ENCODE measurements at regions of chr12 and their contacts with region 1.

Region 1: DNA sequence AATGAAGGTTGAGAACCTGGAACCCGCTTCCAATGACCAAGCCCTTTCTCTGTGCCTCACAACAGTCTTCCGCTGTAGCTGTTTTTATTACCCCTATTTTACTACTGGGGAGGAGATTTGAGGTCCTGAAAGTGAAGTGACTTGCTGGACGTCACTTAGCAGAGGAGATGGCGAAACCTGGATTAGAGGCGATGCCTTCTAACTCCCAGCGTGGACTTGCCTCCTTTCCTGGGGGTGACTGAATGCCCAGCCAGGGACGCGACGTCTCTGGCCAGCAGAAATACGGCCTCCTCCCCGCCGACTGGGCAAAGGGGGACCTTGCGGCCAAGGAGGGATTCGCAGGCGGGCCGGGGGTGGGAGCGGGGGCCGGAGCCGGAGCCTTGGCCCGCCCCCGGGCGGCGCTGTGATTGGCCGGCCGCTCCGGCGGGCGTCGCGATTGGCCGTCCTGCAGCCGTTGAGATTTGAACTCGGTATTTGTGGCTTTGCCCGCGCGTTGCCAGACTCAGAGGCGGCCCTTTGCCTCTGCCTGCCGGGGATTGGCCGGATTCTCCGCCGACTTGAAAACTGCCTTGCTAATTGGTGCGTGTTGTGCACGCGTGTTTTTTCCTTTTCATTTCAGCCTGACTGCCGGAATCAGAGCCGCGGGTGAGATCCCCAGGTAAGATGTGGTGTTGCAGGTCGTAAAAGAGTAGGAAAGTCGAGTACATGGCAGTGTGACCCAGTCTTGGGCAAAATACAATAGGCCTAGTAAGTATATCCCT is at the start of gene NCAPD2:
- DNase-seq: peak; percentile 98 to 99
- H3K4me3 ChIP-seq: peak within 1 kb of the TSS; percentile 81
- H3K4me3 Mint-ChIP-seq: peak within 1 kb of the TSS; percentile 92
- H3K27ac Mint-ChIP-seq: peak within 1 kb of the TSS; percentile 96
- H3K4me1 ChIP-seq: peaks cover 12% of the 10 kb centered on the region
- H3K4me1 Mint-ChIP-seq: peaks cover 10% of the 10 kb centered on the region
- H3K27me3 ChIP-seq: no peaks in the 10 kb centered on the region
- H3K27me3 Mint-ChIP-seq: no peaks in the 10 kb centered on the region
- CTCF ChIP-seq: peak in 1 of 2 experiments; percentile 17
- total RNA-seq, gene NCAPD2: 204 and 218 TPM in 2 replicates

Region 2: GRCh38 chr12:6399884-6400644 is 93.6 kb before region 1 on chr12:
- CTCF ChIA-PET with region 1: no interaction called
- POLR2A ChIA-PET with region 1: interaction called, 14 read pairs
- intact Hi-C with region 1: no loop called
- DNase-seq: no peak
- H3K4me3 ChIP-seq: no peak overlapping the region
- H3K4me3 Mint-ChIP-seq: no peak overlapping the region
- H3K27ac Mint-ChIP-seq: no peak overlapping the region
- H3K4me1 ChIP-seq: no peaks in the 10 kb centered on the region
- H3K4me1 Mint-ChIP-seq: peaks cover 7% of the 10 kb centered on the region
- H3K27me3 ChIP-seq: no peaks in the 10 kb centered on the region
- H3K27me3 Mint-ChIP-seq: no peaks in the 10 kb centered on the region
- CTCF ChIP-seq: no peak

Region 3: DNA sequence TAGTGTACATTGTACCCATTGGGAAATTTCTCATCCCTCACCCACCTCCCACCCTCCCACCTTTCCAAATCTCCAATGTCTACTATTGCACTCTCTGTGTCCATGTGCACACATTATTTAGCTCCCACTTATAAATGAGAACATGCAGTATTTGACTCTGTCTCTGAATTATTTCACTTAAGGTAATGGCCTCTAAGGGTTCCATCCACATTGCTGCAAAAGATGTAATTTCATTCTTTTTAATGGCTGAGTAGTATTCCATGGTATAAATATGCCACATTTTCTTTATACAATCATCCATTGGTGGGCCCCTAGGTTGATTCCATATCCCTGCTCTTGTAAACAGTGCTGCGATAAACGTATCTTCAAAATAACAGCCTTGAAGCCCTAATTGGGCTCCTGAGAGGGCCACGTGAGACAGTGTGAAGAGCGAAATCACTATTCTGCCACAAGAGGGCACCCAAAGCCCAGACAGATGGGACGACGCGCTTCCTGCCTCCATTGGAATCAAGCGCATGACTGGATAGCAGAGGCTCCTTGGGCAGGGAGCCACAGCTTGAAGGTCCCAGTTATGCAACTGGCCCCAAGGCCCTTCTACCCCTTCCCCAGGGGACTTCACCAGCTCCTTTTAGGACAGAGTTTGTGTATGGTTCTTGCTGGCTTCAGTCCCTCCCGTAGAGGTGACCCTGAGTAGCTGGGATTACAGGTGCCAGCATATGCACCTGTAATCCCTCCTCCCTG is 70.2 kb before region 1 on chr12:
- CTCF ChIA-PET with region 1: no interaction called
- POLR2A ChIA-PET with region 1: no interaction called
- intact Hi-C with region 1: loop called (anchors 1 kb)
- DNase-seq: peak; percentile 87
- H3K4me3 ChIP-seq: no peak overlapping the region
- H3K4me3 Mint-ChIP-seq: no peak overlapping the region
- H3K27ac Mint-ChIP-seq: no peak overlapping the region
- H3K4me1 ChIP-seq: peaks cover 8% of the 10 kb centered on the region
- H3K4me1 Mint-ChIP-seq: peaks cover 8% of the 10 kb centered on the region
- H3K27me3 ChIP-seq: no peaks in the 10 kb centered on the region
- H3K27me3 Mint-ChIP-seq: no peaks in the 10 kb centered on the region
- CTCF ChIP-seq: peak; percentile 88 to 97

Region 4: DNA sequence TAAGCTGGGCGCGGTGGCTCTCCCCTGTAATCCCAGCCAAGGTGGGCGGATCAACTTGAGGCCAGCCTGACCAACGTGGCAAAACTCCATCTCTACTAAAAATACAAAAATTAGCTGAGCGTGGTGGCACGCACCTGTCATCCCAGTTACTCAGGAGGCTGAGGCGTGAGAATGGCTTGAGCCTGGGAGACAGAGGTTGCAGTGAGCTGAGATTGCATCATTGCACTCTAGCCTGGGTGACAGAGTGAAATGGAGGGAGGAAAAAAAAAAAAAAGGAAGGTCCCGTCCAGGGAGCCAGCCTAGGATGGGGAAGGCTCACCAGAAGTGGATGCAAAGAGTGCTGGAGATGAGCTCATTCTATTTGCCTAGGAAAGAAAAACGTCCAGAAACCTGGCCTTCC is 50.8 kb before region 1 on chr12:
- CTCF ChIA-PET with region 1: no interaction called
- POLR2A ChIA-PET with region 1: interaction called, 14 read pairs
- intact Hi-C with region 1: no loop called
- DNase-seq: no peak
- H3K4me3 ChIP-seq: no peak overlapping the region
- H3K4me3 Mint-ChIP-seq: no peak overlapping the region
- H3K27ac Mint-ChIP-seq: no peak overlapping the region
- H3K4me1 ChIP-seq: no peaks in the 10 kb centered on the region
- H3K4me1 Mint-ChIP-seq: no peaks in the 10 kb centered on the region
- H3K27me3 ChIP-seq: no peaks in the 10 kb centered on the region
- H3K27me3 Mint-ChIP-seq: no peaks in the 10 kb centered on the region
- CTCF ChIP-seq: no peak

Measured in Caco-2 (cell line).